Cardiac septum (tissue), 1 donor: ENCODE measurements at regions of chr4 and their contacts with region 1.

Region 1: DNA sequence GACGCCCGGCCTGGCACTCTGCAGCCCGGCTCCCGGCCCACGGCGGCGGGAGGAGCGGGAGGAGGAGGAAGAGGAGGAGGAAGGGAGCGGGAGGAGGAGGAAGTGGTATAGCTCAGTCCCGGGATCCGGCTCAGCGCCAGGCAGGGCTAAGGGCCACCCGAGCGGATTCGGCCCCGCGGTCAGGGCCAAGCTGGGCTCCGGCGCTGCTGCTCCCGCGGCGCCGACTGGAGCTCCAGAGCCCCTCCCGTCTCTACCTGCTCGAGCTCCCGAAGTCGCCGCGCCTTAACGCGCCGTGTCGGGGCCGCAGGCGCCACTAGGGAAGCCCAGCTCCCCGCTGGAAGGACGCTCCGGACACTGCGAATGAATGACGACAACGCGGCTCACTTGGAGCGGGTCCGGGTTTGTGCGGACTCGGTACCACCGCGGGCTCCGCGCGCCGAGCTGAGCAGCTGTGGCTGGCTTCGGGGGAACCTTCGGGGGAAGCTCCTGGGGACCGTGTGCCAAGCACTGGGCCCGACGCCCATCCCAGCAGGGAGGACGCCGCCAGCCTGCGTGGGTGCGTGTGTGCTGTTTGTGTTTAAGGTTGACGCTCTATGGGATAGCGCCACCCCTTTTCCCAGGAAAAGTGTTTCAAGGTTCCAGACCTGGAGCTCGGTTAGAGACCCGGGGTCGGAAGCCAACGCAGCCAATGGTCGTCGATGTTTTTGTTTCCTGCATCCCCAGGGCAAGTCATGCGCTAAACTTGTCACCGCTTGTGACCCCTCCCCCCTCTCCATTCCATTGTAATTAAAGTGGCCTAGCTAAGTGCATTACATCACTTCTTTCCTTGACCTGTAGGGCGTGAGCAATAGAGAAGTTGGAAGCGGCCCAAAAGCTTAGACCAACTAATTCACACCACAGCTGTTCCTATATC is at the start of gene TBC1D9:
- DNase-seq: peak; percentile 88
- total RNA-seq, gene TBC1D9: 15.0 TPM

Region 2: DNA sequence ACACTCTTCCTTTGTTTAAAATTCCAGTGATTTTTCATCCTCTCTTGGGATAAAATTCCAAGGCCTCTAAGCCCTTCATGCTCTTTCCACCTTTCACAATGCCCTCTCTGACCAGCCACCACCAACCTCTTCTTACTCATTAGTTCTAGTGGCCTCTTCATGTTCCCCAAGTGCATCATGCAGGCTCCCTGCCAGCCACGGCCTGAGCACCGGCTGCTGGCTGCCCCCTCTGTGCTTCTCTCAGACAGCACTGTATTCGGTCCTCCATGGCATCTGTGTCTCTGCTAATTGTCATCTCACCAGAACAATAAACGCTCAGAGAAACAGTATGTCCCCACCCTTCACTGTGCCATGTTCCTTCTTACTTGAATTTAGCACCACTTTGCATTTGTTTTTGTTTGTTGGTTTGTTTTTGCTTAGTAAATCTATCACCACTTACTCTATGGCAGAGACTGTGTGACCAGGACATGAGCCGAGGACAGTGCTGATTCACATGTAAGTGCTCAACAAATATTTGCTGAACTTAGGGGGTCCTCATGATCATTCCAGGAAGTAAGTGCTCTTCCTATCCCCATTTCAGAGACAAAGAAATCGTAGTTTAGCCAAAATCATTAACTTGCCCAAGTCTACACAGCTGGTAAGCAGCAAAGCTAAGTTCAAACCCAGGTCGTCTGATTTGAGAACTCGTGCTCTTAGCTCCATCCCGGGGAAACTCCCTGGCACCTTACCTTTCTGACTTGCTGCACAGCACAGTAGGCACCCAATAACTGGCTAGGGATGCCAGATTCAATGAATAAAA is 110.8 kb before region 1 on chr4:
- intact Hi-C with region 1: loop called (anchors 5 kb)
- DNase-seq: peak; percentile 81

Region 3: GRCh38 chr4:140691357-140691756 is 65.2 kb before region 1 on chr4:
- intact Hi-C with region 1: loop called (anchors 5 kb)
- DNase-seq: no peak

Region 4: DNA sequence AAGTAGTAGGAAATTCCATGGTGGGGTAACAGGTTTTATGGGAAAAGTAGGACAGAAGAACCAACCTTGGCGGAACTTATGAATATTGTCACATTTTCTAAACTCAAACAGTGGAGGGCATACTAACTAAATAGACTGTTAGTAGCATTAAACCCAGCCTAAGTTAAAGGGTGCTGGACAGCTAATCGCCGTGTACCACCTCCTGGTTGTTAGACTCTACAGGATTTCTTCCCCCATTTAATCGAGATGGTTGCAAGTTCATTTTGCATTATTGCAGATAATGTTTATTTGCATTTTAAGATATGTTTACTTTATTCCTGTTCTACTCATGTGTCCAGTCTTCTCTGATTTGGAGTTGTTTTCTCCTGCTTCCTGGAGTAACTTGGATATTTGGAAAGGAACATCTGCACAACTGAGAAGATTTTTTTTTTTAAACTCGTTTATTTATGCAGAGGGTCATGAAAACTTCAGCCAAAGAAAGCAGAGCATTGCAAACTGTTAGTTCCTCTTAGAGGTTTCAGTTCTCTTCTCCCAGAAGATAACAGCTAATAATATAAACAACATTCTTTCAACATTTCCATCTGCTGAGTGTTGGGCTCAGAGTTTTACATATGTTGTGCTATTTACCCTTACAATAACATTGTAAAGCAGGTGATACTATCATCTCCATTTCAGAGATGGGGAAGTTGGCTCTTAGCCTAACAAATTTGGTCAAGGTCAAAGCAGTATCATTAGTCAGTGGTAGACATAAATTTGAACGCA is 51.1 kb after region 1 on chr4:
- intact Hi-C with region 1: no loop called
- DNase-seq: no peak